ENCODE measurements at regions of chr2 and their contacts with region 1.

Region 1: DNA sequence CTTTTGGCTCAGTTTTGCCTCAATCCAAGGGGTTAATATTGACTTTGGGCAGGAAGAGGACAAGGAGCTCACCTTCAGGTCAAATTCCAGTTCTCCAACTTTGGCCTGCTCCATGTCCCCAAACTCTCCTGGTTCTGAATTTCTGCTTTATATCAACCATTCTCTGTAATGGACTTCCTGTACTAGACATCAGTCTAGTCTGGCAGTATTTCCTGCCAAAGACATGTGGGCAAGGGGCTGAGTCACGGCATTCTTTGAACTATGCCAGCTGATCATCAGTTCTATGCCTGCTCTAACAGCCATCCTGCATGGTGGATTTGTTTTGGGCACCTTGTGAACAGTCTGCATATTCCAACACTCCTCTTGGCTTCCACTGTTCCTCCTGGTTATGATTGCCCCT is 199.4 kb downstream of the ZEB2 start:
- DNase-seq: peak; percentile 70
- ATAC-seq: peak; percentile 49
- H3K4me3 Mint-ChIP-seq: peak overlapping the region; percentile 13
- H3K27ac Mint-ChIP-seq: peak overlapping the region; percentile 71
- H3K4me1 Mint-ChIP-seq: peaks cover 47% of the 10 kb centered on the region
- H3K27me3 Mint-ChIP-seq: no peaks in the 10 kb centered on the region

Region 2: DNA sequence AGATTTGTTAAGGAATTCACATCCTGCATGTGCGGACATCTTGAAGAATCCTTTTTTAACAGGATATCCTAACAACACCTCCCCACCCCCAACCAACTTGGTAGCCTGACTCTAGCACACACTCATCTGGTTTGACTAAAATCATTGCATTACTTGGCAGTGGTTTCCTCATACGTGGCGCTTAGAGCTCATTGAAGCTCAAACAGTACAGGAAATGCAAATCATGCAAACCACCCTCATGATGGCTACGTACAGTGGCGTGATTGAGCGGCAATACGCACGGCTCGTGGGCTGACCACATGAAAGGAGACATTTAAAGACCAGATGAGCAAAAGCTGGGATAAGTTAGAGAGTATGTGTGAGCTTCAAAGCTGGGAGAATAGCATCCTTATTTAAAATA is 136.8 kb before region 1 on chr2:
- CTCF ChIA-PET with region 1: interaction called, 3 read pairs
- POLR2A ChIA-PET with region 1: no interaction called
- intact Hi-C with region 1: loop called (anchors 2 to 5 kb)
- DNase-seq: peak; percentile 89
- ATAC-seq: peak; percentile 100
- H3K4me3 Mint-ChIP-seq: peak overlapping the region; percentile 52
- H3K27ac Mint-ChIP-seq: peak overlapping the region; percentile 86
- H3K4me1 Mint-ChIP-seq: peaks cover 40% of the 10 kb centered on the region
- H3K27me3 Mint-ChIP-seq: no peaks in the 10 kb centered on the region

Region 3: GRCh38 chr2:144267239-144267638 is 53.3 kb before region 1 on chr2:
- CTCF ChIA-PET with region 1: interaction called, 3 read pairs
- POLR2A ChIA-PET with region 1: no interaction called
- intact Hi-C with region 1: loop called in 1 of 2 experiments (anchors 5 kb)
- DNase-seq: peak; percentile 13
- ATAC-seq: peak; percentile 70
- H3K4me3 Mint-ChIP-seq: no peak overlapping the region
- H3K27ac Mint-ChIP-seq: peak overlapping the region; percentile 35
- H3K4me1 Mint-ChIP-seq: peaks cover 24% of the 10 kb centered on the region
- H3K27me3 Mint-ChIP-seq: no peaks in the 10 kb centered on the region

Region 4: DNA sequence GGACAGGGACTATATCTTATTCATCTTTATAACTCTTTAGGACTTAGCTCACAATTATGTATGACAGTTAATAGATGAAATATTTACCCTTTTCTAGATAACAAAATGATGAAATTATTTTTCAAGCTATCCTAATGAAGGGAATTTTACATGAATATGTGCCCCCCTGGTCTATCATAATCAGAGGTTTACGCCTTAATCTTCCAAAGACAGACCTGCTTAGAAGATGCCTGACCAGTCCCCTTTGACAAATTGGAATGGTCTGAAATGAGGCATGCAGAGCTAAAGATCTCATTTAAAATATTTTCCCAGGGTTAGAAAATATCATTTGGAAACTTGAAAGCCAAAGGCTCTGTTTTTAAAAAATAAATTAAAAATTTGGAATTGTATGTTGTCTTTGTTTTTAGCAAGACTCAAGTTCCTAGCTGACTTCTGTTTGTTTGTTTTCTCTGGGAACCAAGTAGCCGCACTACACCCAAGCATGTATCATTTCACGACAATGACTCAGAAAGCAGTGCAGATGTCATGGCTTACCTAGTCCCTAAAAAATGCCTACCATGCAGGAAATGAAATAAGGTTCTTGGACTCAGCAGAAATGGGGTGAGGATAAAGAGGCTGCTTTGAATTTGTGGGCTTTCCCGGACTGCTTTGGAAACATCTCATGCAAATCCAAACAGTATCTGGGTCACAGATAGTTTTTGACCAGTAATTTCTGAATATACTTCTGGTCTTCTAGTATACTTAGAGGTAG is 37.3 kb after region 1 on chr2:
- CTCF ChIA-PET with region 1: no interaction called
- POLR2A ChIA-PET with region 1: interaction called, 4 read pairs
- intact Hi-C with region 1: loop called in 1 of 2 experiments (anchors 1 kb)
- DNase-seq: peak; percentile 51
- ATAC-seq: peak; percentile 84
- H3K4me3 Mint-ChIP-seq: no peak overlapping the region
- H3K27ac Mint-ChIP-seq: peak overlapping the region; percentile 66
- H3K4me1 Mint-ChIP-seq: peaks cover 18% of the 10 kb centered on the region
- H3K27me3 Mint-ChIP-seq: no peaks in the 10 kb centered on the region

Measured in activated CD4-positive, alpha-beta T cell treated with anti-CD3 and anti-CD28 coated beads for 36 hours (primary cell).